Naive thymus-derived CD4-positive, alpha-beta T cell (primary cell): ENCODE measurements at regions of chr17 and their contacts with region 1.

Region 1: DNA sequence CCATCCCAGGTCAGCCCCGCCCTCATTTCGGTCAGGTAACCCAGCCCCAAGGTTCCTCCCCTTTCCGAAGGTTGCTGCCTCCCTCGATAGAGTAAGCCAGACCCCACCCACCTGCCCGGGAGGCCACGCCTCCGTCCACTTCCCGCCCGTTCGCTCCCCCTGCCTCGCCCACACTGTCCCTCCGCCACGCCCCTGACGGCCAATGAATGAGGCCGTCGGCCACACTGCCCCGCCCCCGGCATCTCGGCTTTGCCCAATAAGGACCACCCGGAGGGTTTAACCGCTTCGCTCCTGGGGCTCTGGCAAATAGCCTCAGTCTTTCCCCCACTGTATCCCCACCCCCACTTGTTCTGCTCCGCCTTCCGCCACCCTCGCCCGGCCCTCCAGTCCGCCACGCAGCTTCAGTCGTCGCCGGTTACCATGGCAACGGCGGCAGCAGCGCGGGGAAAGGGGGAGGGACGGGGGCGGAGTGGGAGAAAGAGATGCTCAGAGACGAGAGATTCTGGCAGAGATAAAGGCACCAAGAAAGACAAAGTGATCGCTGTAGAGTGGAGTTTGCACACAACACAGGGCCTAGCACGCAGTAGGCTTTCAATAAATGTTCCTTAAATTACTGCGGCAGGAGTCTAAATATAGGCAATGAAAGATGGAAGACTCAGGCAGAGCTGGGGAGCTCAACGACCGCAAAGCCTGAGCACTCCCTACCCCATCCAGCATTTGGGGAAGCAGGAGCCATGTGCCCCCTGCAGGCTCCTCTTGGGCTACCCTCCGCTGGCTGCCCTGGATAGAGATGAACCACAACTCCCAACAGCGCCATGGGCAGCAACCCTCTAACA is 5.1 kb downstream of the DLG4 start:
- DNase-seq: peak; percentile 96 to 99 (median 97)
- ATAC-seq: peak; percentile 90
- H3K4me3 ChIP-seq: peak overlapping the region; percentile 61
- H3K4me3 Mint-ChIP-seq: peak overlapping the region; percentile 76 to 97 (median 94)
- H3K27ac ChIP-seq: peak overlapping the region; percentile 97
- H3K27ac Mint-ChIP-seq: peak overlapping the region; percentile 90 to 100 (median 99)
- H3K4me1 ChIP-seq: peaks cover 25 to 49% of the 10 kb centered on the region in 2 donors
- H3K4me1 Mint-ChIP-seq: peaks cover 36 to 69% (median 65%) of the 10 kb centered on the region in 7 donors
- H3K27me3 ChIP-seq: no peaks in the 10 kb centered on the region
- H3K27me3 Mint-ChIP-seq: peaks cover 0 to 16% (median 0%) of the 10 kb centered on the region in 5 donors

Region 2: GRCh38 chr17:7114875-7115614 is 99.5 kb before region 1 on chr17:
- CTCF ChIA-PET with region 1: no interaction called
- POLR2A ChIA-PET with region 1: no interaction called
- intact Hi-C with region 1: no loop called
- DNase-seq: no peak
- ATAC-seq: peak; percentile 54
- H3K4me3 ChIP-seq: no peak overlapping the region
- H3K4me3 Mint-ChIP-seq: no peak overlapping the region
- H3K27ac ChIP-seq: no peak overlapping the region
- H3K27ac Mint-ChIP-seq: peak overlapping the region in 2 of 9 donors; percentile 49 to 51
- H3K4me1 ChIP-seq: no peaks in the 10 kb centered on the region
- H3K4me1 Mint-ChIP-seq: peaks cover 3 to 8% (median 5%) of the 10 kb centered on the region in 7 donors
- H3K27me3 ChIP-seq: no peaks in the 10 kb centered on the region
- H3K27me3 Mint-ChIP-seq: peaks cover 6 to 14% (median 8%) of the 10 kb centered on the region in 5 donors

Region 3: DNA sequence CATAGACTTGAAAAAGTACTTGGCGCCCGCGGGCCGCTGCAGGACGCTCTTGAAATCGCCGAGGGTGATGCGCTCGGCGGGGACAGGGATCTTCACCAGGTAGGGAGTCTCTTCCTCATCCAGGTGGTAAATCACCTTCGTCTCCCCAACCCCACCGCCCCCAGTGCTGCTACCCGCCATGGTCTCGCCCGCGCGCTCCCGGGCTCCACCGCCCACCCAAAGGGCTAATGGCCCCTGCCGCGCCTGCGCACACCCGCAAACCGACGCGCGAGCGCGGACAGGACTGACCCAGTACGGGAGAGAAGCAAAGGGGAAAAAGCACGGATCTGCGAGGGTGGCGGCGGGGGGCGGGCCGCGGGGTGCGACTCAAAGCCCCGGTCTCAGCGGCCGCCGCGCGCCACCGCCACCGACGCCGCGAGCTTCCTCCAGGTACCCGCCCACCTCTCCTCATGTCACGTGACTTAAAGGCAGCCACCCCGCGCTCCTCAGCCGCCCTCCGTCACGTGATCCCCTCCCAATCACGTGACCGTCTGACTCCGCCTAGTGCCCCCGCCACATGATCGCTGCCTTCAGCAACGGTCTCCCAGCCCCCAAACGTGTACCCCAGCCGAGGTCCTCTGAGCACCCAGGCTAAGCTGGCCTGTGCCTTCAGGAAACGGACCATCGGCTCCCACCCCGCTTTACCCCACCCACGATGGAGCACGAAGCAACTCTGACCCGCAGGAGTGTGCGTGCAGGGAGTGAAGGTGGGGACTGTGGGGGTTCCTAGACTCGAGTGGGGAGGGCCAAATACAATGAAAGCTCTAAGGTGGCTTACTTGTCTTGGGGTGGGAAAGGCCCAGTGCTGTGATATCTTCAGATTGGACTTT is 19.8 kb after region 1 on chr17 and contains the start of gene DVL2:
- CTCF ChIA-PET with region 1: interaction called, 9 read pairs
- POLR2A ChIA-PET with region 1: interaction called, 265 read pairs
- intact Hi-C with region 1: loop called (anchors 1 kb)
- DNase-seq: peak; percentile 89 to 97 (median 93)
- ATAC-seq: peak; percentile 76
- H3K4me3 ChIP-seq: peak within 1 kb of the TSS; percentile 71
- H3K4me3 Mint-ChIP-seq: peak within 1 kb of the TSS; percentile 87 to 98 (median 96)
- H3K27ac ChIP-seq: peak within 1 kb of the TSS; percentile 84
- H3K27ac Mint-ChIP-seq: peak within 1 kb of the TSS; percentile 72 to 96 (median 93)
- H3K4me1 ChIP-seq: peaks cover 15 to 20% of the 10 kb centered on the region in 2 donors
- H3K4me1 Mint-ChIP-seq: peaks cover 41 to 61% (median 52%) of the 10 kb centered on the region in 7 donors
- H3K27me3 ChIP-seq: no peaks in the 10 kb centered on the region
- H3K27me3 Mint-ChIP-seq: peaks cover 0 to 2% (median 0%) of the 10 kb centered on the region in 5 donors
- total RNA-seq, gene DVL2: 51.2 to 91.5 (median 52.3) TPM

Region 4: GRCh38 chr17:7266784-7267183 is 52.3 kb after region 1 on chr17:
- CTCF ChIA-PET with region 1: no interaction called
- POLR2A ChIA-PET with region 1: no interaction called
- intact Hi-C with region 1: no loop called
- DNase-seq: no peak
- ATAC-seq: no peak
- H3K4me3 ChIP-seq: no peak overlapping the region
- H3K4me3 Mint-ChIP-seq: no peak overlapping the region
- H3K27ac ChIP-seq: no peak overlapping the region
- H3K27ac Mint-ChIP-seq: peak overlapping the region in 2 of 9 donors; percentile 28 to 62
- H3K4me1 ChIP-seq: peaks cover 11 to 19% of the 10 kb centered on the region in 2 donors
- H3K4me1 Mint-ChIP-seq: peaks cover 18 to 23% (median 21%) of the 10 kb centered on the region in 7 donors
- H3K27me3 ChIP-seq: no peaks in the 10 kb centered on the region
- H3K27me3 Mint-ChIP-seq: peaks cover 0 to 43% (median 20%) of the 10 kb centered on the region in 5 donors

Region 5: DNA sequence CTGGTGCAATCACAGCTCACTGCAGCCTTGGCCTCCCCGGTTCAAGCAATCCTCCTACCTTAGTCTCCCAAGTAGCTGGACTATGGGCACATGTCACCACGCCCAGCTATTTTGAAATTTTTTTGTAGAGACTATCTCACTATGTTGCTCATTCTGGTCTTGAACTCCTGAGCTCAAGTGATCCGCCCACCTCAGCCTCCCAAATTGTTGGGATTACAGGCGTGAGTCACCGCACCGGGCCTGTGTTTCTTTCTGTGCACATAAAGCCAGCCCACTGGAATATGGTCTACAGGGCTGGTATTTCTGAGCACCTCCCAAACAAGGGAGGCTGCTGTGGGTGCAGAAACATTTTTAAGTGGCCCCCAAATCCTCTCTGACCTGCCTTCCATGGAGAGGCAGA is 148.8 kb after region 1 on chr17:
- CTCF ChIA-PET with region 1: no interaction called
- POLR2A ChIA-PET with region 1: no interaction called
- intact Hi-C with region 1: no loop called
- DNase-seq: no peak
- ATAC-seq: no peak
- H3K4me3 ChIP-seq: no peak overlapping the region
- H3K4me3 Mint-ChIP-seq: no peak overlapping the region
- H3K27ac ChIP-seq: no peak overlapping the region
- H3K27ac Mint-ChIP-seq: no peak overlapping the region
- H3K4me1 ChIP-seq: no peaks in the 10 kb centered on the region
- H3K4me1 Mint-ChIP-seq: peaks cover 0 to 2% (median 0%) of the 10 kb centered on the region in 7 donors
- H3K27me3 ChIP-seq: no peaks in the 10 kb centered on the region
- H3K27me3 Mint-ChIP-seq: peaks cover 0 to 4% (median 0%) of the 10 kb centered on the region in 5 donors

Region 6: GRCh38 chr17:7416323-7416722 is 201.8 kb after region 1 on chr17:
- CTCF ChIA-PET with region 1: no interaction called
- POLR2A ChIA-PET with region 1: no interaction called
- intact Hi-C with region 1: no loop called
- DNase-seq: peak in 1 of 9 donors; percentile 12
- ATAC-seq: no peak
- H3K4me3 ChIP-seq: no peak overlapping the region
- H3K4me3 Mint-ChIP-seq: no peak overlapping the region
- H3K27ac ChIP-seq: no peak overlapping the region
- H3K27ac Mint-ChIP-seq: peak overlapping the region in 1 of 9 donors; percentile 6
- H3K4me1 ChIP-seq: no peaks in the 10 kb centered on the region
- H3K4me1 Mint-ChIP-seq: peaks cover 0 to 7% (median 0%) of the 10 kb centered on the region in 7 donors
- H3K27me3 ChIP-seq: no peaks in the 10 kb centered on the region
- H3K27me3 Mint-ChIP-seq: no peaks in the 10 kb centered on the region

Region 7: DNA sequence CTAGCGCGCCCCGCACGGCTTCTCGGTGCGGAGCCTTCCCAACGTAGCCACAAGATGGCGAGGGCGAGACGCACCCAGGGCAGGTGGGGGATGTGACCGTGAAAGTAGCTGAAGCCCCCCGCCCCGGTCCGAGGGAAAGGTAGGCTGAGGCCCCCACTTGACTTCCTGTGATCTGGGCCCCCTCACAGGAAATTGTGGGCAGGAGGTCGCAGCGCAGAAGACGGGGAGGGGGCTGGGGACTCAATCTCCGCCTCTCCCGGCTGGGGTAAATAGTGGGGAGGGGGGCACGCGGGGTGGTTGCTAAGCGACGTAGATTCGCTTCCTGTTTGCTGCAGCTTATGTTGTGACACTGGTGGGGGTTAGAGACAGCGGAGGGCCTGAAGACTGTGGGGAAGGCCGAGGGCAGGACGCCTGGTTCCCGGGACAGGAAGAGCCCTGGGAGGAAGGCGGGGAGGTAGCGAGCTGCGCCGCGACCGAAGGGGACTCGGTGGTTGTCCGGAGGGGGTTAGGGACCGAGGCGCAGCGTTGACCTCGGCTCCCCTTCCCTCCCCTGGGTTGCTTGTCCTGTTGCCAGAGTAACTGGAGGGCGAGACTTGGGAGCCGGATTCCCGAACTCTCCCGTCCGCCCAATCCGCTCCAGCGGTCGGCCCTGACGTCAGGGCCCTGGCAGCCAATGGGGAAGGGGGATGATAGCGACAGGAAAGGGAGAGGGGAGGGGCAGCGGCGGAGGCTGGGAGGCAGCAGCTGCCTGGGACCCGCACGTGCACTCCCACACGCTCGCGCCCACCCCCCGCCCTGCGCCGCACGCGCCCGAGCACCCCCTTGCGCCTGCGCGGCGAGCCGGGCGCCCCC is 620.7 kb after region 1 on chr17:
- CTCF ChIA-PET with region 1: no interaction called
- POLR2A ChIA-PET with region 1: no interaction called
- intact Hi-C with region 1: loop called (anchors 10 kb)
- DNase-seq: peak; percentile 76 to 97 (median 95)
- ATAC-seq: peak; percentile 70
- H3K4me3 ChIP-seq: peak overlapping the region; percentile 96
- H3K4me3 Mint-ChIP-seq: peak overlapping the region; percentile 91 to 99 (median 96)
- H3K27ac ChIP-seq: peak overlapping the region; percentile 96
- H3K27ac Mint-ChIP-seq: peak overlapping the region; percentile 95 to 100 (median 99)
- H3K4me1 ChIP-seq: peaks cover 29 to 38% of the 10 kb centered on the region in 2 donors
- H3K4me1 Mint-ChIP-seq: peaks cover 28 to 60% (median 44%) of the 10 kb centered on the region in 7 donors
- H3K27me3 ChIP-seq: no peaks in the 10 kb centered on the region
- H3K27me3 Mint-ChIP-seq: peaks cover 0 to 28% (median 0%) of the 10 kb centered on the region in 5 donors

Region 8: GRCh38 chr17:7844292-7845154 is 630.0 kb after region 1 on chr17:
- CTCF ChIA-PET with region 1: no interaction called
- POLR2A ChIA-PET with region 1: no interaction called
- intact Hi-C with region 1: loop called (anchors 10 kb)
- DNase-seq: peak; percentile 74 to 87 (median 79)
- ATAC-seq: peak; percentile 42
- H3K4me3 ChIP-seq: peak overlapping the region; percentile 84
- H3K4me3 Mint-ChIP-seq: peak overlapping the region; percentile 85 to 99 (median 94)
- H3K27ac ChIP-seq: peak overlapping the region; percentile 100
- H3K27ac Mint-ChIP-seq: peak overlapping the region; percentile 90 to 100 (median 99)
- H3K4me1 ChIP-seq: peaks cover 11 to 26% of the 10 kb centered on the region in 2 donors
- H3K4me1 Mint-ChIP-seq: peaks cover 19 to 41% (median 29%) of the 10 kb centered on the region in 7 donors
- H3K27me3 ChIP-seq: no peaks in the 10 kb centered on the region
- H3K27me3 Mint-ChIP-seq: peaks cover 0 to 2% (median 0%) of the 10 kb centered on the region in 5 donors